ENCODE measurements at regions of chr2 and their contacts with region 1.

Region 1: GRCh38 chr2:157327621-157328500 is 2.2 kb upstream of the ERMN start:
- DNase-seq: no peak
- H3K4me3 ChIP-seq: no peak overlapping the region
- CTCF ChIP-seq: peak; percentile 92

Region 2: DNA sequence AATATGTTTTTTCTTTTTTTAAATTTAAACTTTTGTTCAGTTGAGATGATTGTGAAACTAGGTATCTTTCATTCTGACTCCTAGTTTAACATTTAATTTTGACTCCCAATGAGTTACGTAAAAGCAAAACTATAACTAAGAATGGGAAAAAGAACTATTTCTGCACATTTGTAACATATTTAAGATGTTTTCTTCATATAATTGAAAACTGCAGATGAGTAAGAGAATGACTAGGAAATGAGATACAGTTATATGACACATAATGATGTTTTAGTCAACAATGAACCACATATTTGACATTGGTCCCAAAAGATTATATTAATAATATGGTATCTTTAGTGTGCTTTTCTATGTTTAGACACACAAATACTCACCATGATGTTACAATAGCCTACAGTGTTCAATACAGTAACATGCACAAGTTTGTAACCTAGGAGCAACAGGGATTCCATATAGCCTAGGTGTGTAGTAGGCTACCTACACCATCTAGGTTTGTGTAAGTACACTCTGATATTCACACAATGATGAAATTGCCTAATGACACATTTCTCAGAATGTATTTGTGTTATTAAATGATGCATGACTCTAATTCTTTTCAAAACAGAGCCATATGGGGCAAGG is 14.9 kb before region 1 on chr2:
- CTCF ChIA-PET with region 1: interaction called, 370 read pairs
- POLR2A ChIA-PET with region 1: no interaction called
- DNase-seq: no peak
- H3K4me3 ChIP-seq: no peak overlapping the region
- CTCF ChIP-seq: no peak

Region 3: GRCh38 chr2:157438863-157439823 is 111.3 kb after region 1 on chr2:
- CTCF ChIA-PET with region 1: interaction called, 15 read pairs
- POLR2A ChIA-PET with region 1: no interaction called
- DNase-seq: no peak
- H3K4me3 ChIP-seq: no peak overlapping the region
- CTCF ChIP-seq: no peak

Region 4: DNA sequence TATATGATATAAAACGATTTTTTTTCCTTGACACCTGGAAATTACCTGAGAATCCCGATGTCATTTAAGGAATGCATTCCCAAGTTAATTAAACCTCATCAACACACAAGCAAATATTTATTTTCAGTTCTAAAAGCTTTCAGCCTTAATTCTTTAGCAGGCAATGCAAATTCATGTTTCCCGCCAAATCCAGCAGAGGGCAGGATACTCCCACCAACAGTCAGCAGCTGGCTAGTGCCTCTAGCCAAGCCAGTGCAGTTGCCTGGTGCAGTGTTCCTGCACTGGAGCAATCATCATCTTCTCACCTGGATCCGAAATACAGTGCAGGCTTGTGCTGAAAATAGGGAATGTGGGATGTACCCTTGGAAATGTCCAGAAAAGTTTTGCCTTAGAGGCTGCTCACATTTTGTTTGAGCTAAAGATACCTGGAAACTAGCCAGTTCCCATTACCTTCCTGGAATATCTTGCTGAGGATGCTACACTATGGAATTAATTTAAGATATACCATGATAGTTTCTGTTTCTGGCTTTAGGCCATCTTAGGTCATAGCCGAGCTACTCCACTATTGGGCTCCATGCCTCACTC is 164.4 kb after region 1 on chr2:
- CTCF ChIA-PET with region 1: interaction called, 56 read pairs
- POLR2A ChIA-PET with region 1: no interaction called
- DNase-seq: no peak
- H3K4me3 ChIP-seq: no peak overlapping the region
- CTCF ChIP-seq: peak; percentile 73

Region 5: DNA sequence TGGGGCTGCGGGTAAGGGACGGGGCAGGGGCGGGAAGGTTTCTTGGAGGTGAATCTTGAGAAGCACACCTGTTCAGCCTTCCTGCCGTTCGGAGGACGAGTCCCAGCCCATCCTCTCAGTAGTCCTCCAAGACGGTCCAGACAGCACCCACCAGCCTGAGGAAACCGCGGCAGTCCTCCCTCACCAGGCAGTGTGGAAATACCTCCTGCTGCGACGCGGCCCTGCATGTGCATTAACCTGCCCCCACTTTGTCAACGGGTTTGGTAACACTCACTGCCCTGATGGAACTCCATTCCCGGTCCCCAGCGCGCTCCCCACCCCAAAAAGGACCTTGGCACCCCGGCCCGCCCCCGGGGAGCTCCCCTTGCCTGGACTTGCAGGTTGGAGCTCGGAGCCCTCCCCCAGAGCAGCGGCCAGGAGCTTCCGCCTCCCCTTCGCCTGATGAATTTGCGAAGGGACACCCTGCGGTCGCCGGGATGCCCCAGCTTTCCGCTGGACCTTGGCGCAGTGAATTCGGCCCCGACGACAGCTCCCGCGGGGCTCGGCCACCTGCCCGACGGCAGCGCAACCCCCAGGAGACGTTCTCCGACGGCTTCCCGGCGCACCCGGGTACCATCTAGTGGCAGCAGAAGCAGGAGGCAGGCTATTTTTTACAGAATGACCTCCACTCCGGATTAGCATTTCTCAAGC is 269.3 kb after region 1 on chr2:
- CTCF ChIA-PET with region 1: interaction called, 21 read pairs
- POLR2A ChIA-PET with region 1: no interaction called
- DNase-seq: no peak
- H3K4me3 ChIP-seq: peak overlapping the region; percentile 26
- CTCF ChIP-seq: peak; percentile 66

Region 6: DNA sequence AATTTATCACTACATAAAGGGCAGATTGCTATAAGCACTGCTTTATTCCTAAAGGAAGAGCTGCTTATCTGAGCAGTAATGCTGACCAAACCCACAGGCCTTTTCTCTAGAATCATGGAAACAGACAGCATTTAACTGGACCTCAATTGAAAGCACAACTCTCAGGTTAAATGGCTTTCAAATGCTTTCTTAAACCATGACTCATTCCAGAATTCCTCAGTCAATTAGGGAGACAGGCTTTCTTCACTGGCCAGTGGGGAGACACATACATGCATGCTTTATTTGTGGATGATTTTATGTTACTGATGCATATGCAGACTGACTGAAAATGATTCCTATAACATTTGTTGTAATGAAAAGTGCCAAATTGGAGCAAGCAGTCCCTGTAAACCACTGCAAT is 433.7 kb after region 1 on chr2:
- CTCF ChIA-PET with region 1: no interaction called
- POLR2A ChIA-PET with region 1: no interaction called
- DNase-seq: peak; percentile 68
- H3K4me3 ChIP-seq: no peak overlapping the region
- CTCF ChIP-seq: no peak

Measured in AG04449 (cell line).